Activated CD8-positive, alpha-beta T cell treated with anti-CD3 and anti-CD28 coated beads, Interleukin-2, amount 10 ng/mL, durations not matched to agents 7 days and 5 days (primary cell): ENCODE measurements at regions of chr10 and their contacts with region 1.

Region 1: DNA sequence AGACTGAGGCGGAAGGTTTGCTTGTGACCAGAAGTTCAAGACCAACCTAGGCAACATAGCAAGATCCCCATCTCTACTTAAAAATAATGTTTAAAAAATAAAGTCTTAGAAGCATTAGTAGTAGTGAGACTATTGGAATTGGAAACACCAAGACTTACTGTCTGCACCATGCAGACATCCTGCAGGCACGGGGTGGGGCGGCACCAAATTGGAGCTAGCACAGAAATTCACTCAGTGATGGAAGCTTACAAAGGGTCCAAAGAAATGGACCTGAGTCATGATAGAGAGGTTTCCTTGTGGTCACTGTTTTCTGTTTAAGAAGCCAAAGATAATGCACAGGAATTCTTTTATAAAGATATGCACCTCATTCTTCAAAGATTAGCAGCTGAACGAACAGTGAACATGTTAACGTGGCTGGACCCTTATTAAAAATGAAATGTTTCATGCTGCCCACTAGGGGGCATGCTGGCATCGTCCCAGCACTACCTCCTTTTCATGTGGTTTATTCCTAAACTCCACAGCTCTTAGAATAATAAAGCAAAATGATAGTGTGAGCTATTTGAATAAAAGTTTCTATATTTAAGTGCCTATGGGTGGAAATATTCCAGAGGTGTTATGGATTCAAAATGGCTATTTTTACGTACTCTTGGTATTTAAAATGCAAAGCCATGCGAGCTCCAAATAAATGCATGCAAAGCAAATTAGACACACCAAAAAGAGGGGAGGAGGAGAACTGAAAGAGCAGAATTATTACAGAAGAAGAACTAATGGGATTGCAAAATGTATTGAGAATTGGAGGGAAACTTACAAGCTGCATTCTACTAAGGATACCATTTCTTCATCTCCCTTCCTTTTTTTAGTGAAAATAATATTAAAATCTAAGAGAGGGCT is 28.6 kb downstream of the PDSS1 start:
- DNase-seq: peak; percentile 58
- ATAC-seq: no peak
- H3K4me3 Mint-ChIP-seq: no peak overlapping the region
- H3K27ac Mint-ChIP-seq: no peak overlapping the region
- H3K4me1 Mint-ChIP-seq: peaks cover 12% of the 10 kb centered on the region
- H3K27me3 Mint-ChIP-seq: no peaks in the 10 kb centered on the region

Region 2: DNA sequence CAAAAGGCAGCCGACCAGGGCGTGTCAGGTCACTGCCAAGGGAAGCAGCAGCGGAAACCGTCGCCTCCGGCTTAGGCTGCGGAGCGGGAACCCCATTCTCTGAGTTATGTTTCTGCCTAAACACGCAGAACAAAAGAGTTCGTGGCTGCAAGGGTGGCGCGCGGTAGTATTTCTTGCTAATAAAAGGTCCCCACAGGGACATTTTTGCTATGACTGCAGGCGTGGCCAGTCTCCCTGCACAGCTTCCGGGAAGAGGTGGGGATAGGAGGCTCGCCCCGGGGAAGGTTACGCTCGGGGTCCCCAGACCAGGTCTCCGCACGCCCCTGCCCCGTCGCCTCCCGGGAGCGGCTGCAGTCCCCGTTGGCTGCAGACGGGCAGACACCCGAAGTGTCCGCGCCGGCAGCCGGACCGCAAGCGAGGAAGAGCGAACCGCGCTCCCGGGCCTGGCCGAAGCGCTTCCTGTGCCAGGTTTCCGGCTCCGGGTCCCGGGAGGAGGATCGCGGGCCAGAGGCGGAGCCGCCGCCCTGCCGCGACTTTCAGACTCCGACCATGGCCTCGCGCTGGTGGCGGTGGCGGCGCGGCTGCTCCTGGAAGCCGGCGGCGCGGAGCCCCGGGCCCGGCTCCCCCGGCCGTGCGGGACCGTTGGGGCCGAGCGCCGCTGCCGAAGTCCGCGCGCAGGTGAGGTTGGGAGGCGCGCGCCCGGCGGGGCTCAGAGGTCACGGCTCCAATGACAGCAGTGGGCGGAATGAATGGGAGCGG is 28.7 kb before region 1 on chr10 and contains the start of gene PDSS1:
- CTCF ChIA-PET with region 1: interaction called, 16 read pairs
- POLR2A ChIA-PET with region 1: interaction called, 4 read pairs
- DNase-seq: peak; percentile 72
- ATAC-seq: peak; percentile 86
- H3K4me3 Mint-ChIP-seq: peak within 1 kb of the TSS; percentile 99
- H3K27ac Mint-ChIP-seq: peak within 1 kb of the TSS; percentile 92
- H3K4me1 Mint-ChIP-seq: peaks cover 35% of the 10 kb centered on the region
- H3K27me3 Mint-ChIP-seq: no peaks in the 10 kb centered on the region
- total RNA-seq, gene PDSS1: 17.8 to 19.4 TPM

Region 3: GRCh38 chr10:26714415-26715136 is 11.5 kb before region 1 on chr10:
- CTCF ChIA-PET with region 1: interaction called, 12 read pairs
- POLR2A ChIA-PET with region 1: no interaction called
- DNase-seq: no peak
- ATAC-seq: no peak
- H3K4me3 Mint-ChIP-seq: no peak overlapping the region
- H3K27ac Mint-ChIP-seq: no peak overlapping the region
- H3K4me1 Mint-ChIP-seq: peaks cover 5% of the 10 kb centered on the region
- H3K27me3 Mint-ChIP-seq: no peaks in the 10 kb centered on the region

Region 4: GRCh38 chr10:26755443-26755903 is 29.4 kb after region 1 on chr10:
- CTCF ChIA-PET with region 1: interaction called, 12 read pairs
- POLR2A ChIA-PET with region 1: no interaction called
- DNase-seq: no peak
- ATAC-seq: no peak
- H3K4me3 Mint-ChIP-seq: no peak overlapping the region
- H3K27ac Mint-ChIP-seq: peak overlapping the region; percentile 52
- H3K4me1 Mint-ChIP-seq: peaks cover 5% of the 10 kb centered on the region
- H3K27me3 Mint-ChIP-seq: no peaks in the 10 kb centered on the region

Region 5: GRCh38 chr10:26869528-26869927 is 143.4 kb after region 1 on chr10:
- CTCF ChIA-PET with region 1: interaction called, 24 read pairs
- POLR2A ChIA-PET with region 1: no interaction called
- DNase-seq: no peak
- ATAC-seq: no peak
- H3K4me3 Mint-ChIP-seq: peak overlapping the region; percentile 5
- H3K27ac Mint-ChIP-seq: no peak overlapping the region
- H3K4me1 Mint-ChIP-seq: peaks cover 6% of the 10 kb centered on the region
- H3K27me3 Mint-ChIP-seq: peaks cover 14% of the 10 kb centered on the region